Activated CD4-positive, alpha-beta T cell treated with anti-CD3 and anti-CD28 coated beads for 36 hours (primary cell): ENCODE measurements at regions of chr6 and their contacts with region 1.

Region 1: DNA sequence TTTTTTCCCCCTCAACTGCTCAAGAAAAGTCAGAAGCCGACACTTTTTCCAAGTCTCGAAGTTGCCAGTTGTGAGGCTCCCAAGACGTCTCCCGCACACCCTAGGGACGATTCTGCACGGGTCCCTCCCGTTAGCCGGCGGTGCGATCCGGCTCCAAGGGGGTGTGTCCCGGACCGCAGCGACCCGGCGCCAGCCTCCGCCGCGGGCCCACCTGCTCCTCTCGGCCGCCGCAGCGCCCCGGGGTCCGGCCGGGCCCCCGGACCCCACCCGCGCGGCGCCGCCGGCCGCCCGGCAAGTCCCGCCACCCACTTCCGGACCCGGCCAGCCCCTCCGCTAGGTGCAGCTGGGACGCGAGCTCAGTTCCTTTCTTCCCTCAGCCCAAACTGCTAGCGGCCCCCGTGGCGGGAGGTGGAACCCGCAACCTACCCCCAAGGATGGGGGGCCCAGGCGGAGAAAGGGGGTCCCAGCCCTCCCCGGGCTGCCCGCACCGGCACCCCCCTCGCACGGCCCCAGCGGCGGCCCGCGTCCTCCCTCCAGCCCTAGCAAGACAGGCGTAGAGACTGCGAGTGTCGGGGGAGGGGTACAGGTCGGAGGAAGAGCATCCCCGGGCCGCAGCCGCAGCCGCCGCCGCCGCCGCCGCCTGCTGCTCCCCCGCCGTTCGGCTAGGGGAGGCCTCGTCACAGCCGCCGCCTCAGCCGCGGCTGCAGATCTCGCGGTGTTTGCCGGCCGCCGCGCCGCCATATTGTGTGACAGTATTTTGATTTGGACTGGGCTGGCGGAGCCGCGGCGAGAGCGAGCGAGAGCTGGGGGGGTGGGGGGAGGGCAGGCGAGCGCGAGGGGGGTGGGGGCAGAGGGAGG is 485 bp upstream of the TAB2 start:
- DNase-seq: peak; percentile 94
- ATAC-seq: peak; percentile 71
- H3K4me3 Mint-ChIP-seq: peak overlapping the region; percentile 88
- H3K27ac Mint-ChIP-seq: peak overlapping the region; percentile 92
- H3K4me1 Mint-ChIP-seq: peaks cover 23% of the 10 kb centered on the region
- H3K27me3 Mint-ChIP-seq: no peaks in the 10 kb centered on the region

Region 2: GRCh38 chr6:149140137-149140909 is 176.7 kb before region 1 on chr6:
- CTCF ChIA-PET with region 1: interaction called, 3 read pairs
- POLR2A ChIA-PET with region 1: no interaction called
- intact Hi-C with region 1: loop called (anchors 1 to 2 kb)
- DNase-seq: peak; percentile 85
- ATAC-seq: peak; percentile 84
- H3K4me3 Mint-ChIP-seq: peak overlapping the region; percentile 63
- H3K27ac Mint-ChIP-seq: peak overlapping the region; percentile 97
- H3K4me1 Mint-ChIP-seq: peaks cover 42% of the 10 kb centered on the region
- H3K27me3 Mint-ChIP-seq: no peaks in the 10 kb centered on the region

Region 3: DNA sequence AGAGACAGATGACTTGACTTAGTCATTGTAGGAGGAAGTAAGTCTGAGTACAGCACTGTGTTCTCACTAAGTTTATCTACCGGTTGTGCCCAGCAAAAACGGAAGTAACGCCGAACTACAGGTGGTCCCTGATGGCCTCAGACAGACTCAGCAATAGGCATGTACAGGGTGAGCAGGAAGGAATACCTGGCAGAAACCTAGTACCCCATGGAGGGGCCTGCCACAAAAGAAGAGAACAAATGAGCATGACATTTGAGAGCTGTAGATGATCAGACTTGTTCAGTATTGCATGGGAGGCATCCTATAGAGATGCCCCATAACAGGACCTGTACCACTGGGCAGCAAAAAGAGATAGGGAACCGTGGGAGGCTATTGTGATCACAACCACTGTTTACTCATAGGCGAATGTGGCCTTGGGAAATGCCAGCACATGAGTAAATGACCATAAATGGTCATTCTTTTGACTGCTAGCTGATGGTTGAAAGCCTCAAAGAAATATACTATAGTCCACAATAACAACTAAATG is 105.9 kb before region 1 on chr6:
- CTCF ChIA-PET with region 1: no interaction called
- POLR2A ChIA-PET with region 1: interaction called, 3 read pairs
- intact Hi-C with region 1: loop called (anchors 1 to 2 kb)
- DNase-seq: peak; percentile 36
- ATAC-seq: peak; percentile 54
- H3K4me3 Mint-ChIP-seq: no peak overlapping the region
- H3K27ac Mint-ChIP-seq: peak overlapping the region; percentile 82
- H3K4me1 Mint-ChIP-seq: peaks cover 3% of the 10 kb centered on the region
- H3K27me3 Mint-ChIP-seq: no peaks in the 10 kb centered on the region

Region 4: GRCh38 chr6:149271348-149272340 is 45.4 kb before region 1 on chr6:
- CTCF ChIA-PET with region 1: no interaction called
- POLR2A ChIA-PET with region 1: interaction called, 6 read pairs
- intact Hi-C with region 1: loop called in 1 of 2 experiments (anchors 5 kb)
- DNase-seq: peak; percentile 80
- ATAC-seq: peak; percentile 83
- H3K4me3 Mint-ChIP-seq: peak overlapping the region; percentile 26
- H3K27ac Mint-ChIP-seq: peak overlapping the region; percentile 89
- H3K4me1 Mint-ChIP-seq: peaks cover 35% of the 10 kb centered on the region
- H3K27me3 Mint-ChIP-seq: no peaks in the 10 kb centered on the region

Region 5: GRCh38 chr6:149366267-149366921 is 49.4 kb after region 1 on chr6:
- CTCF ChIA-PET with region 1: no interaction called
- POLR2A ChIA-PET with region 1: interaction called, 3 read pairs
- intact Hi-C with region 1: loop called in 1 of 2 experiments (anchors 2 kb)
- DNase-seq: no peak
- ATAC-seq: peak; percentile 63
- H3K4me3 Mint-ChIP-seq: no peak overlapping the region
- H3K27ac Mint-ChIP-seq: no peak overlapping the region
- H3K4me1 Mint-ChIP-seq: peaks cover 51% of the 10 kb centered on the region
- H3K27me3 Mint-ChIP-seq: no peaks in the 10 kb centered on the region

Region 6: DNA sequence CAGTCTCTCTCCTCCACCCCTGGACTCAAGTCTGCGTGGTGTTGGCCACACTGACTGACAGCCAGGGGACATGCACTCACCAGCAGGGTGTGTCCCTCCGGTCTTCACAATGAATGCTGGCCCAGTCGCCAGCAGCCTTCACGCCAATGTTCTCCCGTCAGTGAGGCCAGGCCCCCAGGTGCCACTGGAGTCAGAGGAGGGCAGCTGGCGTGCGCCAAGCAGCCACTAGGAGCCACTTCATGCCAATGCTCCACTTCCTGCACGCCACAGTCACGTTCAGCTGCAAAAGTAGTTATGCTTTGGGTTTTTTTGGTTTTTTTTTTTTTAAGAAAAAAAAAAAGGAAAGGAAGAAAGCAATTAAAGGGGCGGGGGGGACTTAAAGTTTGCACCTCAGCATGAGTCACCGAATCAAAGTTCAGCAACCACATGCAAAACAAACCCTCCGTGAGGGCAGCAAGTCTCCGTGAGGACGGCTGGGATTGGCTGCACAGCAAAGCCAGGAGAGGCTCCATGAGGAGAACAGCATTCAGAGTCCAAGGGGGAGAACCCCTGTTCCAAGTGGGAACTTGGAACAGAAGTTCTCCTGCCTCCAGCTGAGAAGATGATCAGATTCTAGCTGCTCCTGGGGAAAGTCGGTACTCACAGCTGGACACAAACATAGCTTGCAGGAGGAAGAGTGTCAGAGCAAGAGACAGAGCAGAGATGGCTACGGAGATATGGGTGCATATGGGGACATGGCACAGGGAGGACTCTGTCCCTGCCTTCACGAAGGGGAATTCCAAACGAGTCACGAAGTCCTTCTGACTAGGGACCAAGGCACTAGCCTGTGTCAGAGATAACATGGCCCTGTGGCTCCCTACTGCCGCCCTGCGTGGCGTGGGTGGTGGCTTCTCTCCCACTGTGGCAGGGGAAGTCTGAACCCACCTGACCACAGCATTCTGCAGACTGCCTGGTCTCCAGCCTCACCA is 168.0 kb after region 1 on chr6 and contains the start of gene ZC3H12D:
- CTCF ChIA-PET with region 1: no interaction called
- POLR2A ChIA-PET with region 1: no interaction called
- intact Hi-C with region 1: loop called in 1 of 2 experiments (anchors 2 kb)
- DNase-seq: peak; percentile 92
- ATAC-seq: peak; percentile 78
- H3K4me3 Mint-ChIP-seq: peak within 1 kb of the TSS; percentile 92
- H3K27ac Mint-ChIP-seq: peak within 1 kb of the TSS; percentile 99
- H3K4me1 Mint-ChIP-seq: peaks cover 65% of the 10 kb centered on the region
- H3K27me3 Mint-ChIP-seq: no peaks in the 10 kb centered on the region
- total RNA-seq, gene ZC3H12D: 72.2 to 89.9 TPM

Region 7: DNA sequence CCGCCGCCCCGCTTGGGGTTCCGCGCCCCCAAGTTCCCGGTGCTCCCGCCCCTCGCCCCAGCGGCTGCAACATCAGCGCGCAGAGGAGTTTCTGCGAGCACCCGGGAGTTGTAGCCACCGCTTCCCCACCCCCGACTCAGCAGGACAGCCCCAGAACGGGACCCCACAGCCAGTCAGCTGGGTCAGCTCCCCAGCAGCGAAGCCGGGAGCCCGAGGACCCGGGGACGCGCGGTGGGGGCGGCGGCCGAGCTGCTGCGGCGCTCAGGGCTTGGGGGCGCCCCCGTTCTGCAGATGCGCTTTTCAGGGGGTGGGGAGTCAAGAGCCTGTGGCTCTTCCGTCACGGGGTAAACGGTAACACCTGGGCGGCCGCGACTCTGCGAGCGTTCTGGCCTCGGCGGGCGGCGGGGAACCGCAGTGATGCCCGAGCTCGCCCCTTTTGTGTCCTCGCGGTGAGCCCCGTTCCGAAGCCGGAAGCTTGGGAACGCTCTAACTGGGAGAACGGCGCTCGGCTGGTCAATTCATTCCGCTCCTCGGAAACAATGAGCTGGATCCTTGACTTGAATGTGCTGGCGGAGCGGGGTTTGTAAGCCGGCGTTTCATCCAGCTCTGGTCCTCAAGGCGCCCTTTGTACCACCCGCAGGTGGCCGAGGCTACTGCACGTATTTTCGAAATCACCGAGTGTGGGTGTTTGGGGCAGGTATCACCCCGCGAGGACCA is 1283.4 kb after region 1 on chr6:
- CTCF ChIA-PET with region 1: no interaction called
- POLR2A ChIA-PET with region 1: no interaction called
- intact Hi-C with region 1: loop called in 1 of 2 experiments (anchors 5 kb)
- DNase-seq: peak; percentile 90
- ATAC-seq: peak; percentile 65
- H3K4me3 Mint-ChIP-seq: peak overlapping the region; percentile 80
- H3K27ac Mint-ChIP-seq: peak overlapping the region; percentile 88
- H3K4me1 Mint-ChIP-seq: peaks cover 23% of the 10 kb centered on the region
- H3K27me3 Mint-ChIP-seq: peaks cover 24% of the 10 kb centered on the region